HCT116 (cell line): ENCODE measurements at regions of chr1 and their contacts with region 1.

Region 1: GRCh38 chr1:115545791-115546733 is 95.7 kb upstream of the VANGL1 start:
- DNase-seq: peak; percentile 76
- ATAC-seq: peak; percentile 93
- H3K4me3 ChIP-seq: peak overlapping the region; percentile 14 to 45
- H3K27ac ChIP-seq: peak overlapping the region; percentile 64
- H3K4me1 ChIP-seq: peaks cover 15 to 25% of the 10 kb centered on the region in 2 experiments
- H3K27me3 ChIP-seq: no peaks in the 10 kb centered on the region
- CTCF ChIP-seq: peak; percentile 80 to 89 (median 83)
- POLR2A ChIP-seq: no peak
- RAD21 ChIP-seq: peak; percentile 82

Region 2: GRCh38 chr1:115356356-115356755 is 189.7 kb before region 1 on chr1:
- CTCF ChIA-PET with region 1: no interaction called
- POLR2A ChIA-PET with region 1: no interaction called
- RAD21 ChIA-PET with region 1: no interaction called
- intact Hi-C with region 1: no loop called
- DNase-seq: no peak
- ATAC-seq: no peak
- H3K4me3 ChIP-seq: no peak overlapping the region
- H3K27ac ChIP-seq: no peak overlapping the region
- H3K4me1 ChIP-seq: peaks cover 0 to 4% of the 10 kb centered on the region in 2 experiments; a peak in 1 of 4 replicates
- H3K27me3 ChIP-seq: no peaks in the 10 kb centered on the region; the same call in 1 of the 2 replicates
- CTCF ChIP-seq: no peak
- POLR2A ChIP-seq: no peak
- RAD21 ChIP-seq: no peak

Region 3: GRCh38 chr1:115595279-115596079 is 49.4 kb after region 1 on chr1:
- CTCF ChIA-PET with region 1: interaction called, 4 read pairs
- POLR2A ChIA-PET with region 1: no interaction called
- RAD21 ChIA-PET with region 1: interaction called in 1 of 2 experiments, 3 read pairs
- intact Hi-C with region 1: loop called (anchors 1 kb)
- DNase-seq: peak; percentile 68
- ATAC-seq: peak; percentile 97
- H3K4me3 ChIP-seq: no peak overlapping the region
- H3K27ac ChIP-seq: no peak overlapping the region
- H3K4me1 ChIP-seq: peaks cover 4% of the 10 kb centered on the region in 2 experiments; a peak in 2 of 4 replicates
- H3K27me3 ChIP-seq: no peaks in the 10 kb centered on the region
- CTCF ChIP-seq: peak; percentile 76 to 97 (median 90)
- POLR2A ChIP-seq: no peak
- RAD21 ChIP-seq: peak; percentile 91

Region 4: DNA sequence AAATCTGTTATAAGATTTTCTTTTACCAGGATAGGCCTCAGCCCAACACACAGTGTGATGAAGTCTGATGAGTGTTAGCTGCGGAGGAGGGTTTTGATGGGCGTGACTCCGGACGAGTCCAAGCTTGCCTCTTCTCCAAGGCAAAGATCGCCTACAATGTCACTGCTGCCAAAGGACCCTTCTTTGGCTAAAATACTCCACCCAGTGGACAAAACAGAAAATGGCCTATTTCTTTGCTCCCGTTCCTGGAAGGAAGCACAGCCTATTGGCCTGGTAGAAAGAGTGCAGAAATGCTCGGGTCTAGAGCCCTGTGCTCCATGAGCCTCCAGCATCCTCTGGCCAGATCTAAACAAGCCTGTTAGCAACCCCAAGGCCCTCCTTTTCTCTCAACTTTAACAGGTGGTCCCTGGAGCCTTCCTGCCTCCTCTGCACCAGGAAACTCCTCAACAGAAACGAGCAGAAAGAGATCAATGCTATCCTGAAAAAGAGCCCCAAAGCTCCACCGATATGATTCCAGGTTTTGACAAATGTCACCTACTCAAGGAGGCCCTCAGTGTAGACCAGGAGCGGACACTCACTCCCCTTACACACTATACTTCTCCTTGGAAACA is 225.9 kb after region 1 on chr1:
- CTCF ChIA-PET with region 1: interaction called, 3 read pairs
- POLR2A ChIA-PET with region 1: no interaction called
- RAD21 ChIA-PET with region 1: no interaction called
- intact Hi-C with region 1: loop called (anchors 5 kb)
- DNase-seq: peak; percentile 82
- ATAC-seq: peak; percentile 96
- H3K4me3 ChIP-seq: peak overlapping the region; percentile 12 to 29; a peak in 2 of 4 replicates
- H3K27ac ChIP-seq: peak overlapping the region; percentile 38; the same call in 1 of the 2 replicates
- H3K4me1 ChIP-seq: peaks cover 5 to 13% of the 10 kb centered on the region in 2 experiments; a peak in 3 of 4 replicates
- H3K27me3 ChIP-seq: no peaks in the 10 kb centered on the region
- CTCF ChIP-seq: peak; percentile 74 to 80 (median 79)
- POLR2A ChIP-seq: no peak
- RAD21 ChIP-seq: peak; percentile 92